ENCODE measurements at regions of chr4 and their contacts with region 1.

Region 1: GRCh38 chr4:112031712-112032328 is 113.4 kb upstream of the FAM241A start:
- DNase-seq: no peak
- ATAC-seq: peak; percentile 68
- H3K4me3 Mint-ChIP-seq: no peak overlapping the region
- H3K27ac Mint-ChIP-seq: no peak overlapping the region
- H3K4me1 Mint-ChIP-seq: peaks cover 21% of the 10 kb centered on the region
- H3K27me3 Mint-ChIP-seq: no peaks in the 10 kb centered on the region
- CTCF ChIP-seq: no peak; the same call in 1 of the 2 replicates

Region 2: DNA sequence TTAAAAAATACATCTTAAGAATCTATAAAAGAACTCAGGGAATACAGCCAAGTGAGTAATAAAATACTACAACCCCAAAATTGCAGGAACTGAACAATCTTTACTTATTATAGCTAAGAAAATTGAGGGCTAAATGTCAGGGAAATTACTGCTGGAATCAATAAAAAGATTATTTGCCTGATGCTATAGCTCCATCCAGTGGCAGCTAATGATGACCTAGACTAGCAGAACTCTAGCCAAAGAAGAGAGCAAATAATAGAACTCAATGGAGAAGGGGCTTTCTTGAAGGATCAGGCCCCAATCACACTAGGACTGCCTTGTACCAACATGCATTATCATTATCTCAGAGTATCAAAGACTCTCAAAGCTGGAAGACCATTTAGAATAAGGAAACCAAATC is 28.4 kb after region 1 on chr4:
- CTCF ChIA-PET with region 1: interaction called, 20 read pairs
- POLR2A ChIA-PET with region 1: no interaction called
- DNase-seq: no peak
- ATAC-seq: peak; percentile 70
- H3K4me3 Mint-ChIP-seq: no peak overlapping the region
- H3K27ac Mint-ChIP-seq: no peak overlapping the region
- H3K4me1 Mint-ChIP-seq: peaks cover 12% of the 10 kb centered on the region
- H3K27me3 Mint-ChIP-seq: no peaks in the 10 kb centered on the region
- CTCF ChIP-seq: no peak

Measured in WTC11 (cell line).